T-cell (primary cell): ENCODE measurements at regions of chr5 and their contacts with region 1.

Region 1: GRCh38 chr5:172188033-172188892 is at the start of gene STK10:
- DNase-seq: peak; percentile 81 to 93 (median 86)
- ATAC-seq: peak; percentile 78 to 84 (median 81)
- H3K4me3 ChIP-seq: peak within 1 kb of the TSS; percentile 82 to 89
- H3K4me3 Mint-ChIP-seq: peak within 1 kb of the TSS; percentile 95 to 100 (median 96)
- H3K27ac ChIP-seq: peak within 1 kb of the TSS; percentile 95
- H3K27ac Mint-ChIP-seq: peak within 1 kb of the TSS; percentile 94 to 100
- H3K4me1 ChIP-seq: peaks cover 19 to 32% of the 10 kb centered on the region in 2 experiments
- H3K4me1 Mint-ChIP-seq: peaks cover 25 to 31% (median 28%) of the 10 kb centered on the region in 3 donors
- H3K27me3 ChIP-seq: no peaks in the 10 kb centered on the region
- H3K27me3 Mint-ChIP-seq: no peaks in the 10 kb centered on the region
- total RNA-seq, gene STK10: 305 to 437 (median 331) TPM

Region 2: GRCh38 chr5:171913987-171914273 is 274.3 kb before region 1 on chr5:
- CTCF ChIA-PET with region 1: interaction called in 1 of 2 experiments, 14 read pairs
- POLR2A ChIA-PET with region 1: no interaction called
- DNase-seq: no peak
- ATAC-seq: no peak
- H3K4me3 ChIP-seq: no peak overlapping the region
- H3K4me3 Mint-ChIP-seq: no peak overlapping the region
- H3K27ac ChIP-seq: no peak overlapping the region
- H3K27ac Mint-ChIP-seq: peak overlapping the region; percentile 81 to 83
- H3K4me1 ChIP-seq: peaks cover 4 to 7% of the 10 kb centered on the region in 2 experiments
- H3K4me1 Mint-ChIP-seq: peaks cover 45 to 52% (median 49%) of the 10 kb centered on the region in 3 donors
- H3K27me3 ChIP-seq: no peaks in the 10 kb centered on the region
- H3K27me3 Mint-ChIP-seq: no peaks in the 10 kb centered on the region

Region 3: DNA sequence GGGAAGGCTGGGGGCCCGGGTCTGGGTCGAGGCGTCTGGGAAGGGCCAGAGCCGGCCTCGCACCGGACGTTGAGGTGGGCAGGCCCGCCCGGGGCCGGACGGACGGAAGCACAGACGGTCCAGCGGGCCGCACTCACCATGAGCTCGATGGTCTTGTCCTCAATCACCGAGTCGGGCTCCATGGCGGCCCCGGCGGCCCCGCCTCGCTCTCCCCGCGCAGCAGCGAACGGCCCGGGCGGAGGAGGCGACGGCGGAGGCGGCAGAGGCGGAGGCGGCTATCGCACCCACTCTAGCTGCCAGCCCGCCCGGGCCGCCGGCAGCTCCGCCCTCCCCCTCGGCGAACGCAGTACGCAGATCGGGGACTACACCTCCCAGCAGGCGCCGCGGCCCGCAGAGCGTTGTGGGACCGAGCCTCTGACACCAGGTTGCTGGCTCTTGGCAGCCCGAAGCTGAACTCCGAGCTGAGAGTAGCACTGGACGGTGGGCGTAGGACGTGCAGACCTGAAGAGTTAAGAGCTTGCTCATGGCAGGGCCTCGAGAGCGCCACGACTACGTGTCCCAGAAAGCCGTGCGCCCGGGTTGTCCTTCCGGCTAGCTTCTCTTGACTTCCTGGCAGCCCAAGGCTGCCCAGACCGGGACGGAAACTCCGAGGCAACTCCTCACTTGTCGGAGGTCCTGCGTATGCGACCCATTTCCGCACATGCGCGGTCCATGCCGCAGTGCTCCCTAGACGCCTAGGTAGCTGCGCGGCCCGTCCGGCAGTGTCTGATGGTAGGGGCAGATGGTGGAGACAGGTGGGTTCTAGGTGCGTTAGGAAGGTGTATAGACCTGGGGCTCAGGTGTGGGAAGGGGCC is 181.7 kb before region 1 on chr5 and contains the start of gene FBXW11:
- CTCF ChIA-PET with region 1: interaction called in 1 of 2 experiments, 14 read pairs
- POLR2A ChIA-PET with region 1: interaction called in 1 of 2 experiments, 6 read pairs
- DNase-seq: peak; percentile 84 to 96 (median 92)
- ATAC-seq: peak; percentile 89 to 94 (median 90)
- H3K4me3 ChIP-seq: peak within 1 kb of the TSS; percentile 65 to 99
- H3K4me3 Mint-ChIP-seq: peak within 1 kb of the TSS; percentile 96 to 98 (median 98)
- H3K27ac ChIP-seq: peak within 1 kb of the TSS; percentile 93
- H3K27ac Mint-ChIP-seq: peak within 1 kb of the TSS; percentile 94 to 100
- H3K4me1 ChIP-seq: peaks cover 11 to 27% of the 10 kb centered on the region in 2 experiments
- H3K4me1 Mint-ChIP-seq: peaks cover 53 to 58% (median 54%) of the 10 kb centered on the region in 3 donors
- H3K27me3 ChIP-seq: no peaks in the 10 kb centered on the region
- H3K27me3 Mint-ChIP-seq: no peaks in the 10 kb centered on the region
- total RNA-seq, gene FBXW11: 33.4 to 36.6 (median 34.2) TPM

Region 4: GRCh38 chr5:172106511-172107356 is 81.5 kb before region 1 on chr5:
- CTCF ChIA-PET with region 1: interaction called, 16 to 18 read pairs
- POLR2A ChIA-PET with region 1: interaction called, 3 read pairs
- DNase-seq: peak in 32 of 35 experiments; percentile 19 to 81 (median 52)
- ATAC-seq: peak in 3 of 4 experiments; percentile 10 to 42 (median 41)
- H3K4me3 ChIP-seq: no peak overlapping the region
- H3K4me3 Mint-ChIP-seq: peak overlapping the region in 1 of 3 donors; percentile 18
- H3K27ac ChIP-seq: peak overlapping the region; percentile 65
- H3K27ac Mint-ChIP-seq: peak overlapping the region; percentile 62 to 84
- H3K4me1 ChIP-seq: peaks cover 14 to 62% of the 10 kb centered on the region in 2 experiments
- H3K4me1 Mint-ChIP-seq: peaks cover 44 to 60% (median 51%) of the 10 kb centered on the region in 3 donors
- H3K27me3 ChIP-seq: no peaks in the 10 kb centered on the region
- H3K27me3 Mint-ChIP-seq: no peaks in the 10 kb centered on the region

Region 5: GRCh38 chr5:172114875-172115422 is 73.3 kb before region 1 on chr5:
- CTCF ChIA-PET with region 1: interaction called, 14 to 15 read pairs
- POLR2A ChIA-PET with region 1: interaction called, 3 to 19 read pairs
- DNase-seq: peak in 34 of 35 experiments; percentile 34 to 82 (median 56)
- ATAC-seq: peak; percentile 8 to 56 (median 20)
- H3K4me3 ChIP-seq: peak overlapping the region; percentile 24 to 51
- H3K4me3 Mint-ChIP-seq: peak overlapping the region; percentile 45 to 76 (median 63)
- H3K27ac ChIP-seq: peak overlapping the region; percentile 89
- H3K27ac Mint-ChIP-seq: peak overlapping the region; percentile 90 to 94
- H3K4me1 ChIP-seq: peaks cover 38 to 95% of the 10 kb centered on the region in 2 experiments
- H3K4me1 Mint-ChIP-seq: peaks cover 80 to 88% (median 84%) of the 10 kb centered on the region in 3 donors
- H3K27me3 ChIP-seq: no peaks in the 10 kb centered on the region
- H3K27me3 Mint-ChIP-seq: no peaks in the 10 kb centered on the region

Region 6: DNA sequence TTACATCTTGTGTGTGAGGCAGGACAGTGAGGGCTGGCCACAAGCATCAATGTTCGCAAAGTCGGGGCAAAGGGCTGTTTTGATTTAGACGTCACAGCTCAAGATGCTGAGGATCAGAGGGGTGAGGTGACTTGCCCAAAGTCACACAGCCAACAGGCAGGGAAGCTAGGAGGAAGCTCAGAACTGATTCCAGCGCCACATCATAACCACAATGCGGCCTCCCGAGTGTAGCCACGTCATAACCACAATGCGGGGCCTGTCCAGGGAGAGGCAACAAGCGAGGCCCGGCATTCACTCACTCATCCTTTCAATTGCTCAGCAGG is 14.5 kb before region 1 on chr5:
- CTCF ChIA-PET with region 1: interaction called, 15 to 119 read pairs
- POLR2A ChIA-PET with region 1: interaction called, 25 to 68 read pairs
- DNase-seq: peak in 33 of 35 experiments; percentile 14 to 77 (median 48)
- ATAC-seq: peak in 1 of 4 experiments; percentile 4
- H3K4me3 ChIP-seq: peak overlapping the region; percentile 67 to 86
- H3K4me3 Mint-ChIP-seq: peak overlapping the region; percentile 89 to 95 (median 89)
- H3K27ac ChIP-seq: peak overlapping the region; percentile 74
- H3K27ac Mint-ChIP-seq: peak overlapping the region; percentile 100
- H3K4me1 ChIP-seq: peaks cover 55 to 96% of the 10 kb centered on the region in 2 experiments
- H3K4me1 Mint-ChIP-seq: peaks cover 98 to 100% (median 99%) of the 10 kb centered on the region in 3 donors
- H3K27me3 ChIP-seq: no peaks in the 10 kb centered on the region
- H3K27me3 Mint-ChIP-seq: no peaks in the 10 kb centered on the region

Region 7: GRCh38 chr5:172266676-172267092 is 78.4 kb after region 1 on chr5:
- CTCF ChIA-PET with region 1: no interaction called
- POLR2A ChIA-PET with region 1: no interaction called
- DNase-seq: no peak
- ATAC-seq: no peak
- H3K4me3 ChIP-seq: no peak overlapping the region
- H3K4me3 Mint-ChIP-seq: no peak overlapping the region
- H3K27ac ChIP-seq: no peak overlapping the region
- H3K27ac Mint-ChIP-seq: no peak overlapping the region
- H3K4me1 ChIP-seq: no peaks in the 10 kb centered on the region
- H3K4me1 Mint-ChIP-seq: peaks cover 17% of the 10 kb centered on the region in 3 donors
- H3K27me3 ChIP-seq: no peaks in the 10 kb centered on the region
- H3K27me3 Mint-ChIP-seq: no peaks in the 10 kb centered on the region